Activated B cell treated with CpG ODN at 0.5 μM for 24 hours (primary cell): ENCODE measurements at regions of chr7 and their contacts with region 1.

Region 1: DNA sequence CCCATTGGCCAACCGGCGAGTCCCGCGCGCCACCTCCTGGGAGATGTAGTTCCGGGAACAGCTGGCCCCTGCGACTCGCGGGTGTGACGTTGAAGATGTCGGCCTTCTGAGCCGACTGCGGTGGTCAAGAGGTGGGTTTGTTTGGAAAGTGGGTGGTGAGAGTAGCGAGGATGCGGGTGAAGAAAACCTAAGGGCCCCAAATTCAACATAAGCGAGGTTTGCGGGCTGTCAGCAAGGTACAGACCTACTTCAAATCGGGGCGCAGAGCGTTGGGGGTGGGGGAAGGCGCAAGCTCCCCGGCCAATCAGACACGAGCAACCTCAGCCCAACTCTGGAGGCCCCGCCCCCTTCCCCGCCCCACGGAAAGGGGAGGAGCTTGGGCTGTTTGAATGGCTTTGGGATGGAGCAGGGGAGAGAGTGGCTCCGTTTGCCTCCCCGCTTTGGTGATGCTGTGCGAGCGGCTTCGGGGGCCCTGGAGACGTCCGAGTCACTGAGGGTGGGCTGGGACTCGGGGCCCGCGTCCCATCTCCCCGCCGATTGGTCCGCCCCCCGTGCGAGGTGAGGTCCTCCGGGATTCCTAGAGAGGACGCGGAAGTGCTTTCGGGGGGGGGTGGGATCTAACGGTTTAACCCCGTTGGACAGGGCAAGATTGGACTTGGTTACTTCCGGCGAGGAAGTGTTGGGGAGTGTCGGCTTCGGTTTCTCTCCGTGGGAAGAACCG is at the start of gene ZKSCAN5:
- DNase-seq: peak; percentile 93
- ATAC-seq: peak; percentile 84
- H3K4me3 Mint-ChIP-seq: peak within 1 kb of the TSS; percentile 98
- H3K27ac Mint-ChIP-seq: peak within 1 kb of the TSS; percentile 98
- H3K4me1 Mint-ChIP-seq: peaks cover 38% of the 10 kb centered on the region
- H3K27me3 Mint-ChIP-seq: no peaks in the 10 kb centered on the region
- CTCF ChIP-seq: no peak
- total RNA-seq, gene ZKSCAN5: 9.5 and 10.3 TPM in 2 replicates

Region 2: DNA sequence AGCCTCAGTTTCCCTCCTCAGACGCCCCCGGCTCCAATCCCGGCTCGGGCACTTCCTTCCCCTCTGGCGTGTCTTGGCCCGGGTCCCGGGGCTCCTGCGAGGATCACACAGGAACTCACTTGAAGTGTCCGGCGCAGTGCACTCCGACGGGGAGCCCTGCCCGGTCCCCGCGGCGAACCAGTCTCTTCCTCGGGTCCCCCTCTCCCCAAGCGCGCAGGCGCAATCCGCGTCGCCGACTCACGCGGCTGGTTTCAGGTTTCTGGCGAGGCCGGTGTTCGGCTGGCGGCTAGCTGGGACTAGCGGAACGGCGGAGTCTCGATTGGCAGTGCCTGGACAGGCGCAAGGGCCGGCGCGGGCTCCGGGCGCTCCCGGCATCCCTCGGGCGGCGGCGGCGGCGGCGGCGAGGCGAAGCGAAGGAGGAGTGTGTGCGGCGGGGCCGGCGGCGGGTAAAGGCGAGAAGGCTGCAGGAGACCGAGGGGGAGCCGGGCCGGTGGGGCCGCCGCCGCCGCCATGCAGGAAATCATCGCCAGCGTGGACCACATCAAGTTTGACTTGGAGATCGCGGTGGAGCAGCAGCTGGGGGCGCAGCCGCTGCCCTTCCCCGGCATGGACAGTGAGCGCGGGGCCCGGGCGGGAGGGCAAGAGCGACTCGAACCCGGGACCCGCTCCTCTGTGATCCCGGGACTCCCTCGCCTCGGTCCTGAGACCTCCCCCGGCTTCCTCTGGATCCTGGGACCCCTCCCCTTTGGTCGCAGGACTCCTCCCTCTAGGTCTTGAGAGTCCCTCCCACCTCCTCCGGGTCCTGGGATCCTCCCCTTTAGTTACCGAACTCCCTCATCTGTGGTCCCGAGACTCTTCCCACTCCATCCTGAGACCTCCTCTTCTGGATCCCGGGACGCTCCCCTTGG is 65.9 kb before region 1 on chr7 and contains the starts of genes CPSF4 and PTCD1:
- CTCF ChIA-PET with region 1: no interaction called
- POLR2A ChIA-PET with region 1: interaction called, 15 read pairs
- intact Hi-C with region 1: loop called (anchors 1 kb)
- DNase-seq: peak; percentile 84
- ATAC-seq: peak; percentile 94
- H3K4me3 Mint-ChIP-seq: peak within 1 kb of the TSS; percentile 98
- H3K27ac Mint-ChIP-seq: peak within 1 kb of the TSS; percentile 94
- H3K4me1 Mint-ChIP-seq: peaks cover 32% of the 10 kb centered on the region
- H3K27me3 Mint-ChIP-seq: no peaks in the 10 kb centered on the region
- CTCF ChIP-seq: no peak
- total RNA-seq, gene CPSF4: 46.2 and 60.9 TPM in 2 replicates
- total RNA-seq, gene PTCD1: 8.4 and 13.4 TPM in 2 replicates

Region 3: DNA sequence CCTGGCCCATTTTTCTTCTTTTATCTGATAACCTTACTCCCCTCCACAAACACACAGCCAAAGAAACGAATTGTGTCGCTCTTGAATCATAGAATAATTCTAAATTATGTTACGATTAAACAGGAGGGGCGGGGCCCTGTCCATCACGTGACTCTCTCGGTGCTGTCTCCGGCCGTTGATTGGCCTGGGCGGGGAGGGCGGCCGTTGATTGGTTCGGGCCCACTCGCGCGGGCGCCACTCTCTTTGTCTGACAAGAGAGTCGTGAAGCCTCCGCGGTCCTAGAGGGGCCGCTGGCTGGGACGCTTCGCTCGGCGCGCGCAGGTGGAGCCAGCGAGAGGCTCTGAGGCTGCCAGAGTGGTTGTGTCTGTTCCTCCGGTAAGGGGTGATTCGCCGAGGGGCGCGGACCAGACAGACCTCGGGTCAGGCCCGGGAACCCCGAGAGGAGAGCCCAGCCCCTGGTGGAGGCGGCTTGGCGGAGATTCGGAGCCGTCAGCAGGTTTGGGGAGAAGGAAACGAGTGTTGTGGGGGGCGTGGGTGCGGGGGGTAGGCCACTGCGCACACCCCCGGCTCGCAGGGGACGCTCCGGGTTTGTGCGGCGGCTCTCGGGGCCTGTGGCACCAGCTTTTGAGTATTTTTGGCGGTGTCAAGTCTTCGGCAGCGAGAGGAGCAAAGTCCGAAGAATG is 32.1 kb before region 1 on chr7 and contains the start of gene ZNF789:
- CTCF ChIA-PET with region 1: interaction called, 3 read pairs
- POLR2A ChIA-PET with region 1: interaction called, 26 read pairs
- intact Hi-C with region 1: loop called (anchors 1 kb)
- DNase-seq: peak; percentile 90
- ATAC-seq: peak; percentile 97
- H3K4me3 Mint-ChIP-seq: peak within 1 kb of the TSS; percentile 98
- H3K27ac Mint-ChIP-seq: peak within 1 kb of the TSS; percentile 93
- H3K4me1 Mint-ChIP-seq: peaks cover 25% of the 10 kb centered on the region
- H3K27me3 Mint-ChIP-seq: no peaks in the 10 kb centered on the region
- CTCF ChIP-seq: no peak
- total RNA-seq, gene ZNF789: 24.5 and 38.3 TPM in 2 replicates

Region 4: GRCh38 chr7:99558306-99559174 is 53.8 kb after region 1 on chr7 and contains the start of gene ZNF655:
- CTCF ChIA-PET with region 1: interaction called, 3 read pairs
- POLR2A ChIA-PET with region 1: interaction called, 69 read pairs
- intact Hi-C with region 1: loop called (anchors 1 kb)
- DNase-seq: peak; percentile 85
- ATAC-seq: peak; percentile 79
- H3K4me3 Mint-ChIP-seq: peak within 1 kb of the TSS; percentile 97
- H3K27ac Mint-ChIP-seq: peak within 1 kb of the TSS; percentile 97
- H3K4me1 Mint-ChIP-seq: peaks cover 49% of the 10 kb centered on the region
- H3K27me3 Mint-ChIP-seq: no peaks in the 10 kb centered on the region
- CTCF ChIP-seq: no peak
- total RNA-seq, gene ZNF655: 98.5 and 116 TPM in 2 replicates

Region 5: GRCh38 chr7:99918959-99919813 is 414.4 kb after region 1 on chr7 and contains the start of gene TRIM4:
- CTCF ChIA-PET with region 1: no interaction called
- POLR2A ChIA-PET with region 1: interaction called, 9 read pairs
- intact Hi-C with region 1: loop called (anchors 1 kb)
- DNase-seq: peak; percentile 80
- ATAC-seq: peak; percentile 97
- H3K4me3 Mint-ChIP-seq: peak within 1 kb of the TSS; percentile 94
- H3K27ac Mint-ChIP-seq: peak within 1 kb of the TSS; percentile 93
- H3K4me1 Mint-ChIP-seq: peaks cover 49% of the 10 kb centered on the region
- H3K27me3 Mint-ChIP-seq: no peaks in the 10 kb centered on the region
- CTCF ChIP-seq: no peak
- total RNA-seq, gene TRIM4: 33.1 and 35.8 TPM in 2 replicates

Region 6: DNA sequence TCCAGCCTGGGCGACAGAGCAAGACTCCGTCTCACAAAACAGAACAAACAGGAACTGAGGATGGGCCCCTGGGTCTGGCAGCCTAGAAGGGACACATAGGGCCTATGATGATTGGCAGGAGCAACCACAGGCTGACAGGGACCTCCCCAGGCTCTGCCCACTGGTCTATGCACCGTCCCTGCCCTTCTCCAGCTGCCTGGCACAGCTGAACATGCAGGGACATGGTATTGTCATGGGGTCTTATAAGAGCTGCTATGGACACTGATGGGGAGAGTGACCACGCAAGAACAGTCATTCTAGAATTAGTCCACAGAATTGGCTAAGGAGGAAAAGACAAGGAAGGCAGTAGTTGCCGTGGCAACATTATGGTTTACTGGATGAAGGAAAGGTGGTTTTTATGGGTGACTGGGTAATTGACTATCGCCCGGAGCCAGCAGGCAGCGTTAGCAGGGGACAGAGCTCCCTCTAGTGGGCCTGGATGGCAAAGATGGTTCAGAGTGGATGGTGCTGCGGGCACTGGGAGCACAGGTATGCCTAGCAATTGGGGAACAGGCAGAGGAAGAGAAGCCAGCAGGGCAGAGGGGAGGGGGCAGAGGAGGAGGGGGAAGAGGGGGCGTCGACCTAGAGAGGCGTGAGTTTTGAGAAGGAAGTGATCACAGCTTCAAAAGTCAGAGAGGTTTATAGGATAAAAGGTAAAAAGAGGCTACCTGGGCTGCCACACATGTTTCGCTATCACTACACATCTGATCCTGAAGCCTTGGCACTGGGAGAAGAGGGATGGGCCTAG is 1572.7 kb after region 1 on chr7:
- CTCF ChIA-PET with region 1: no interaction called
- POLR2A ChIA-PET with region 1: no interaction called
- intact Hi-C with region 1: loop called (anchors 5 kb)
- DNase-seq: peak; percentile 67
- ATAC-seq: peak; percentile 94
- H3K4me3 Mint-ChIP-seq: peak overlapping the region; percentile 8
- H3K27ac Mint-ChIP-seq: peak overlapping the region; percentile 33
- H3K4me1 Mint-ChIP-seq: peaks cover 9% of the 10 kb centered on the region
- H3K27me3 Mint-ChIP-seq: no peaks in the 10 kb centered on the region
- CTCF ChIP-seq: peak; percentile 32